AG04450 (cell line): ENCODE measurements at regions of chr14 and their contacts with region 1.

Region 1: DNA sequence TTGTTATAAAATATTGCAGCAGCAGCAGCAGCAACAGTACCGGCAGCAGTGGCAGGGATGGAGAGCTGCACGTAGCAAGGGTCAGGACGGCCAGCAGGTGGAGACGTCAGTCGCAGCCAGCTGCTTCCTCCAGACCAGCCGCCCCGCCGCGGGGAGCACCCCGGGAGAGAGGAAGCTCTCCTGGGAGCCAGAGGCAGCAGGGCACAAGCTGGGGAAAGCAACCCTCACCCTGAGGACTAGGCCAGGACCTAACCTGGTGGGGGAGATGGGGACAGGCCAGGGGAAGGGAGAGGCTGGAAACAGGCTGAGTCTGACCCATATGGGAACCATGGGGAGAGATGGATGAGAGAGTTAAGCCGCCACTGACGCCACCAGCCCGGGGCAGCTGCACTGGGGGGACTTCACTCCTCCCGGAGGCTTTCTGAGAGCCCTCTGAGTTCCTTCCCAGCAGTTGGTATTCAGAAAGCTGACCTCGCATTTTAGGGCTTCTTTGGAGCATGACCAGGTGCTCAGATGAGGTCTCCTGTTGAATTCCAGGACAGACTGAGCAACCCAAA is 56.3 kb downstream of the SPTB start:
- DNase-seq: no peak
- H3K4me3 ChIP-seq: no peak overlapping the region
- H3K27ac ChIP-seq: no peak overlapping the region
- H3K27me3 ChIP-seq: peaks cover 35% of the 10 kb centered on the region
- CTCF ChIP-seq: peak; percentile 84

Region 2: GRCh38 chr14:64450255-64450654 is 373.1 kb before region 1 on chr14:
- CTCF ChIA-PET with region 1: no interaction called
- POLR2A ChIA-PET with region 1: no interaction called
- DNase-seq: no peak
- H3K4me3 ChIP-seq: no peak overlapping the region
- H3K27ac ChIP-seq: no peak overlapping the region
- H3K27me3 ChIP-seq: no peaks in the 10 kb centered on the region
- CTCF ChIP-seq: no peak

Region 3: DNA sequence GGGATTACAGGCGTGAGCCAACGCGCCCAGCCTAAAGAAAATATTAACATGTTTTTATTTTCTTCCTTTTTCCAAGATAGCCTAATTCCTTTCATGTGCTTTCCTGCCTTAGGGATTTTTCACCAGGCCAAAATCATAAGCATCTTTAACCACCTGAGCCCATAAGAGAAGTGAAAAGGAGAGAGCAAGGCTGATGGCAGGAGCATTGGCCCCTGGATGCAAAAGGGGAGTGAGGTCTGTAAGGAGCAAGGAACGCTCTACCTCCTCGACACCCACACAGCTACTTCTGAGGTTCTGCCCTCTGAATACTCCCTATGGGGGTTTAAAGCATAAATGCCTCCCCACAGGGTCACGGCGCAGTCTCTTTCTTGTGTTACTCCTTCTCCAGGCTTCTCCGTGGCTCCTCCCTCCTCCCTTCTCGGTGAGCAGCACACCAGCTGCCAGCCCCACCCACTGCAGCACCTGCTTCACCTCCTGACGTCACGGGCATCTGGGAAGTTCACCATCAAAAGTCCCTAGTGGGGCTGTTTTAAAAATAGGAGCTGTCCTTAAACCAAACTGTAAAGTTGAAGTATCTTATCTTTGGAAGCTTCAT is 11.1 kb before region 1 on chr14:
- CTCF ChIA-PET with region 1: interaction called, 28 read pairs
- POLR2A ChIA-PET with region 1: no interaction called
- DNase-seq: no peak
- H3K4me3 ChIP-seq: no peak overlapping the region
- H3K27ac ChIP-seq: no peak overlapping the region
- H3K27me3 ChIP-seq: peaks cover 12% of the 10 kb centered on the region
- CTCF ChIP-seq: no peak

Region 4: DNA sequence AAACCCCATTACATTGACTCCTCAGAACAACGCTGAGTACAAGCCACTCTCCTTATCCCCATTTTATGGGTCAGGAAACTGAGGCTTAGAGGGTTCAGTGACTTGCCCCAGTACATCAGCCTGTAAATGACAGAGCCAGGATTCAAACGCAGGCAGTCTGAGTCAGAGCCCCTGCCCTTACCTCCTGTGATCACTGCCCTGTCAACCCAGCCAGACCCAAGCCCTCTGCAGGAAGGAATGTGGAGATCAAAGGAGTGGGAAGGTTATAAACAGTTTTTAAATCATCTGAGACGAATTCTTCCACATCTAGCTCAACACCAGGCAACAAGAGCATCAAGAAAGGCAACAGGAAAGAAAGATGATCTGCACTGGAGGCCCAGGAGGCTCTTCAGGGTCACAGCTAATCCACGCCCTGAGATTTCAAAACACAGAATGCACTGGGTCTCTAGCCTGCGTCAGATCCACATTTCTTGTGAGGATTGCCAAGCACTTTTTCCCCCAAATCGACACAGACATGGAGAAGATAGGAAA is 17.8 kb after region 1 on chr14:
- CTCF ChIA-PET with region 1: interaction called, 29 read pairs
- POLR2A ChIA-PET with region 1: no interaction called
- DNase-seq: peak; percentile 26
- H3K4me3 ChIP-seq: no peak overlapping the region
- H3K27ac ChIP-seq: no peak overlapping the region
- H3K27me3 ChIP-seq: peaks cover 44% of the 10 kb centered on the region
- CTCF ChIP-seq: peak; percentile 64

Region 5: DNA sequence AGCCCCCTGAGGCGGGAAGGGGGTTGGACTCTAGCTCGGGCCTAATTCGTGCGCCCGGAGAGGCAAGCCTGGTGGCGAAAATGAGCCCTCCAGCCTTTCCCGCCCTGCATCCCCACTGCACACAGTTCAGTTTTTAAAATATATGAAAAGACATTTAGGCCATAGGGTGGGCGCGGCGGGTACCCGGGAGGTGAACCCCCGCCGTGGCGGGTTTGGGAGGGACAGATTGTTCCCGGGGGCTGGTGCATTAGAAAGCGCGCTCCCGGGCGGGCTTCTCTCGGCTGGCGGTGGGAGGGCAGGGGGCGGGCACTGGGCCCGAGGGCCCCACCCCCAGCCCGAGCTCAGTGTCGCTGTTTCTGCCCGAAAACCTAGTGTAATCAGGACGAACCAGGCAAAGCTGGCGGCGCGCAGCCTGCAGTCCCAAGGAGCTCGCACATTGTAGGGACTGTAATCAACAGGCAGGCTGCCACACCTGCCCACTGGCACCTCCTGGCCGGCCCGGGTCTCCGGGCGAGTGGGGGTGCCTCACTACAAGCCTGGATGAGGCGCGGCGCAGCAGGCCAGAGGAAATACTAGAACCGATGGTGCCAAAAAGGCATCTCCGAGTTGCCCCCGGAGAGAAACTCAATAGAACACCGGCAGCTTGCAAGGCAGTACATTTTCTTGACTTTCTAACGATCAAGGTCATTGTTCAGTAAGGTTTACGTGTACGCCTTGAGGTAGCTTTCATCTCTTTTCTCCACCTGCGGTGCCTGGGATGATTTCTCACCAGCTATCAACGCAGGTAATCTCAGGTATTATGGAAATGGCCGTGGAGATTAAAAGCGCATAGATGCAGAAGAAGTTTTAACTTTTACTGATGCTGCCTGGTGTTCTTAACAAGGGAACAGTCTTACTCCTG is 57.1 kb after region 1 on chr14:
- CTCF ChIA-PET with region 1: interaction called, 15 read pairs
- POLR2A ChIA-PET with region 1: no interaction called
- DNase-seq: no peak
- H3K4me3 ChIP-seq: peak overlapping the region; percentile 29; the same call in 1 of the 2 replicates
- H3K27ac ChIP-seq: no peak overlapping the region
- H3K27me3 ChIP-seq: peaks cover 79% of the 10 kb centered on the region
- CTCF ChIP-seq: no peak

Region 6: DNA sequence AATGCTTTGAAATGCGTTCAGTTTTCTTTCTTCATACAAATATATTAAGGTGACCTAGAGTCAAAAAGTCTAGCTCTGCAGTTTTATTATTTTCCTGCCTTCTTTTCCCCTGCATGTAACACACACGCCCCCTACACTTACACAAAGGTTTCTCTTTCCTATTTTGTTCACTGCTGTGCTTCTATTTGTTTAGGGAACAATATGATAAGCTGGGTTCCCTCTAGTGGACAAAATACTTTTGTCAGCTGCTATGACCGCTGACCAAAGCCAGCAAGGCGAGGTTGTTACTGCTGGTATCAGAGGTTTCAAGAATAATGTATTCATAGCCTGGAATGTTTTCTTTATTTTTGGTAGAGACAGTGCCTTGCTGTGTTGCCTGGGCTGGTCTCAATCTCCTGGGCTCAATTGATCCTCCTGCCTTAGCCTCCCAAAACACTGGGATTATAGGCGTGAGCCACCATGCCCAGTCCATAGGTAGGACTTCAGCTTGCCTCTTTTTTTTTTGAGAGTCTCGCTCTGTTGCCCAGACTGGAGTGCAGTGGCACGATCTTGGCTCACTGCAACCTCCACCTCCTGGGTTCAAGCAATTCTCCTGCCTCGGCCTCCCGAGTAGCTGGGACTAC is 196.7 kb after region 1 on chr14:
- CTCF ChIA-PET with region 1: interaction called, 13 read pairs
- POLR2A ChIA-PET with region 1: no interaction called
- DNase-seq: peak; percentile 54
- H3K4me3 ChIP-seq: no peak overlapping the region
- H3K27ac ChIP-seq: no peak overlapping the region
- H3K27me3 ChIP-seq: no peaks in the 10 kb centered on the region
- CTCF ChIP-seq: peak; percentile 84